Activated T-helper 1 cell treated with anti-CD3 and anti-CD28 coated beads, Interleukin-12 subunit alpha, Interleukin-12 subunit beta, Interleukin-2, Interleukin-4 antibody, amounts not matched to agents 30 ng/mL and 10 ng/mL and 1 ng/mL, durations not matched to agents 14 hours and 24 hours and 36 hours (primary cell): ENCODE measurements at regions of chr22 and their contacts with region 1.

Region 1: DNA sequence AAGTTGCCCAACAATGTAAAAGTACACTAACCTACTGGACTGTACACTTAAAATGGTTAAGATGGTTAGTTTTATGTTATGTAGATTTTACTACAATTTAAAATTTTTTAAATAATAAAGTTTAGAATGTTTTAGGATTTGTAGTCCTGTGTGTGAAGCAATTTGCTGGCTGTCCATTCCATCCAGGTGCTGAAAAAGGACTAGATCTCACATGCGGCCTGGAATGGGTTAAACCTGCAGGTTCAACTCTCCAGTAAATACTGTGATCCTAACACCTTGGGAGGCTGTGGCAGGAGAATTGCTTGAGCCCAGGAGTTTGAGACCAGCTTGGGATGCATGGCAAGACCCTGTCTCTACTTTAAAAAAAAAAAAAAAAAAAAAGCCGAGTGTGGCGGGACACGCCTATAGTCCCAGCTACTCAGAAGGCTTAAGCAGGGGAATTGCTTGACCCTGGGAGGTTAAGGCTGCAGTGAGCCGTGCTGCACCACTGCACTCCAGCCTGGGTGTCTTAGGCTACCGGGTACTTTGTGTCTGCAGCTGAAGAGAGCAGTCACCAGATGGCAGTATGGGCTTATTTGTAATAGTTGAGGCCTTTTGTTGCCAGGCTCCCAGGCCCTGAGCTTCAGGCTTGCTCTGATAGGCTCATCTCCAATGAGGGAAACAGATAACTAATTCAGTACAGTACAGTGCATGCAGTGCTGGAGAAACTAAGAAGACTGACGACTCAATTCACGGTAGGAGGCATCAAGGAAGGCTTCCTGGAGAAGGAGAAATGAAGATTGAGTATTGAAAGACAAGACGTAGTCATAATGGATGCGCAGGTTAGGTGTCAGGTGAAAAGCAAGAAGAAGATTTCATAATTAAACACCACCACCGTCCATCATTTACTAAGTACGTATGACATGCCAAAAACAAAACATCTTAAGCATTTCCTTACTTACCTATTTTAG is 64.7 kb upstream of the ASPHD2 start:
- DNase-seq: peak; percentile 44
- H3K4me3 Mint-ChIP-seq: no peak overlapping the region
- H3K27ac Mint-ChIP-seq: no peak overlapping the region
- H3K4me1 Mint-ChIP-seq: peaks cover 12% of the 10 kb centered on the region
- H3K27me3 Mint-ChIP-seq: peaks cover 17% of the 10 kb centered on the region

Region 2: DNA sequence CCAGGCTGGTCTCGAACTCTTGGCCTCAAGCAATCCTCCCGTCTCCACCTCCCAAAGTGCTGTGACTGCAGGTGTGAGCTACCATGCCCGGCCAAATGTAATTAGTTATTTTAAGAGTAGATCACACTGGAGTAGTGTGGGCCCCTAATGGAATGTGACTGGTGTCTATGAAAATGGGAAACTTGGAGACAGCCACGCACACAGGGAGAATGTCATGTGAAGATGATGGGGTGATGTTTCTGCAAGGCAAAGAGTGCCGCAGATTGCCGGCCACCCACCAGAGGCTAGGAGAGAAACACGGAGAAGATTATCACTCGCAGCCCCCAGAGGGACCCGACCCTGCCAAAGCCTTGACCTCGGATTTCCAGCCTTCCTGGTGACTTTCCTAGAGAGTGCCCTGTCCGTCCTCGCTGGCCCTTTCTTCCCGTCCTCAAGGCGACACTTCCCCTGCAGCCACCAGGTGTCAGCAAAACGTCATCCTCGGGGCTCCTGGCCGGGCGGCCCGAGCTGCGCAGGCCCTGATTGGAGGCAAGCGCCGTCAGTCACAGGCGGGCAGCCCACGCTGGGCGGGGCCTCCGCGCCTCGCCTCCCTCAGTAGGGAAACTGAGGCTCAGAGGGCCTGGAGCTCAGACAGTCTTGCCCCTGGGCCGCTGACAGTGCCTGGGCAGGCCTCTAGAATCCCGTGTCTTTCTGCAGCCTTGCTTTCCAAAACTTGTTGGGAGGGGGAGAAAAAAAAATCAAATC is 1128.6 kb before region 1 on chr22:
- intact Hi-C with region 1: loop called (anchors 10 kb)
- DNase-seq: peak; percentile 67
- H3K4me3 Mint-ChIP-seq: no peak overlapping the region
- H3K27ac Mint-ChIP-seq: no peak overlapping the region
- H3K4me1 Mint-ChIP-seq: peaks cover 4% of the 10 kb centered on the region
- H3K27me3 Mint-ChIP-seq: peaks cover 28% of the 10 kb centered on the region

Region 3: GRCh38 chr22:26079009-26079738 is 285.2 kb before region 1 on chr22:
- intact Hi-C with region 1: no loop called
- DNase-seq: no peak
- H3K4me3 Mint-ChIP-seq: no peak overlapping the region
- H3K27ac Mint-ChIP-seq: no peak overlapping the region
- H3K4me1 Mint-ChIP-seq: no peaks in the 10 kb centered on the region
- H3K27me3 Mint-ChIP-seq: peaks cover 1% of the 10 kb centered on the region

Region 4: GRCh38 chr22:26330966-26331625 is 33.2 kb before region 1 on chr22:
- intact Hi-C with region 1: no loop called
- DNase-seq: peak; percentile 44
- H3K4me3 Mint-ChIP-seq: no peak overlapping the region
- H3K27ac Mint-ChIP-seq: no peak overlapping the region
- H3K4me1 Mint-ChIP-seq: peaks cover 5% of the 10 kb centered on the region
- H3K27me3 Mint-ChIP-seq: peaks cover 16% of the 10 kb centered on the region

Region 5: GRCh38 chr22:26461188-26461810 is 97.0 kb after region 1 on chr22:
- intact Hi-C with region 1: loop called (anchors 1 kb)
- DNase-seq: peak; percentile 16
- H3K4me3 Mint-ChIP-seq: no peak overlapping the region
- H3K27ac Mint-ChIP-seq: no peak overlapping the region
- H3K4me1 Mint-ChIP-seq: no peaks in the 10 kb centered on the region
- H3K27me3 Mint-ChIP-seq: no peaks in the 10 kb centered on the region

Region 6: DNA sequence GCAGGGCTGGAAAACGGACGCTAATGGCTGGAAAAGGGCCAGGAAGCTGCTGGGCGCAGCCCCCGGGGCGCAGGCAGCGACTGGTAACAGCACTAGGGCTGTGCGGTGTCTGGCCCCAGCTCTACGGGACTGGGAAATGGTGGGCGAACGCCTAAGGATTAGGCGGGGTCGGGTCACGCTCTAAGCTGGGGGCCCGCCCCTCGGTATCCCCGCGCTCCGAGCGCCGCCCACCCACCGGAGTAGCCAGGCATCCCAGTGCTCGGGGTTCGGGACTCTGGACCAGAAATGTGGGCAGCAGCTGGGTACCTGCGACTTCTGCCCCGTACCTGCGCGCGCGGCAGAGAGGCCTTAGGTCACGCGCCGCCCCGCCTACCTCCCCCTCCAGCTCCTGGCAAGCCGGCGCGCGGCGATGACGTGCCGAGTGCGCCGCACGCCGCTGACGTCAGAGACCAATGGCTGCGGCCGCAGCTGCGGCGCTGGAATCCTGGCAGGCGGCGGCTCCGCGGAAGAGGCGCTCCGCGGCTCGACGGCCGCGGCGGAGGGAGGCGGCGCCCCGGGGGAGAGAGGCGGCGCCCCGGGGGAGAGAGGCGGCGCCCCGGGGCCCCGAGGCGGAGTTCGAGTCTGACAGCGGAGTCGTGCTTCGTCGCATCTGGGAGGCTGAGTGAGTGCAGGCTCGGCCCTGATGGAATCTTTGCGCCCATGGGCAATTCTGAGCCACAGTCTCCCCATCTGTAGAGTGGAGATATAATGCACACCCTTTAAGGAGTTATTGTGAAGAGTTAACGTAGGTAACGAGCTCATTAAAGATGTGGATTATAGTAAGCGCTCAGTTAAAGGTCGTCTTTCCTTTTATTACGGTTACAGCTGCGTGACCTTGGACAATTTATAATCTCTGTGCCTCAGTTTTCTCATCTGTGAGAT is 119.4 kb after region 1 on chr22 and contains the starts of genes HPS4 and SRRD:
- intact Hi-C with region 1: loop called (anchors 1 kb)
- DNase-seq: peak; percentile 93
- H3K4me3 Mint-ChIP-seq: peak within 1 kb of the TSS; percentile 95
- H3K27ac Mint-ChIP-seq: peak within 1 kb of the TSS; percentile 94
- H3K4me1 Mint-ChIP-seq: peaks cover 70% of the 10 kb centered on the region
- H3K27me3 Mint-ChIP-seq: no peaks in the 10 kb centered on the region
- total RNA-seq, gene HPS4: 43.8 and 44.5 TPM in 2 replicates
- total RNA-seq, gene SRRD: 29.2 and 34.8 TPM in 2 replicates

Region 7: DNA sequence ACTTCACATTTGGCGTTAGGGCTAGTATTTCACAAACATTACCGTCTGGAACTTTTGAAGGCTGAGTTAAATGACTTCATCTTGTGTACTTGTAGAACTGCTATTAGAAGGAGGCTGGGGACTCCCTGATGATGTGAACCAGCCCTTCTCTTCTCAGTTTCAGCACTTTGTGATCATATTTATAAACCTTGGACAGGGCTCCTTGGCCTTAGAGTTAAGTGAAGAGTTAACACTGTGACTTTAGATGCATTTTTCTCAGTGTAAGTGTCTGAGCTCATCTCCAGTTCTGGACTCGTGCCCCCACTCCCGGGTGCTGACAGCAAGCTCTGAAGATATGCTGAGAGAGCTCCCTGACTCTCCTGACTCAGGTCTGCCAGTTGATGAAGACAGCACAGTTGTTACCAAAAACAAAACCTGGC is 301.5 kb after region 1 on chr22:
- intact Hi-C with region 1: loop called (anchors 1 kb)
- DNase-seq: no peak
- H3K4me3 Mint-ChIP-seq: peak overlapping the region; percentile 75
- H3K27ac Mint-ChIP-seq: peak overlapping the region; percentile 96
- H3K4me1 Mint-ChIP-seq: peaks cover 76% of the 10 kb centered on the region
- H3K27me3 Mint-ChIP-seq: no peaks in the 10 kb centered on the region